ENCODE measurements at regions of chr20 and their contacts with region 1.

Region 1: DNA sequence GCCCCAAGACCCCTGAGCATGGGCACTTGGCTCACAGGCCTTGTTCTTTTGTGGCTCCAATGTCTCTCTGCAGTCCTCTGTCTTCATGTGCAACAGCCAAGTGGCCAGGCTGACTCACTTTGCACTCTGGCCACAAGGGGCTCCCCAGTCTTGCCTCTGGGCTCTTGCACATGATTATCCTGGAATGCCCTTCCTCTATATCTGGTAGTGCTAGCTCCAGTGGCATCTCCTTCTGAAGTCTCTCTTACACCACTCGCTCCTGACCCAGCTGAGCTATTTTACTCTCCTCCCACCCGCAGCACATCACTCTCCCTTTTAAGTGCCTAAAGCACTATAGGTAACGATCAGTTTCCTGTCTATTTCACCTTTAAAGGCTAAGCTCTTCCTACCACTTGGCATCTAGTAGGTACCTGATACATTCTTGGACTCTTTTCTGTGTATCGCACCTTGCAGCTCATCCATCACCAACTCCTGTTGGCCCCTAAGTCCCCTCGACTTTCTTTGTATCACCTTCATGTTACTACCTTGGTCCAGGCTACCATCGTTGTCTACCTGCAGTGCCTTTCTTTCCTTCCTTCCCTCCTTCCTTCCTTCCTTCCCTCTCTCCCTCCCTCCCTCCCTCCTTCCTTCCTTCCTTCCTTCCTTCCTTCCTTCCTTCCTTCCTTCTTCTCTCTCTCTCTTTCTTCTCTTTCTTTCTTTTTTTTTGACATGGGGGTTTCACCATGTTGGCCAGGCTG is 211.9 kb upstream of the RNF24 start:
- H3K4me3 Mint-ChIP-seq: no peak overlapping the region
- H3K27ac Mint-ChIP-seq: no peak overlapping the region
- H3K4me1 Mint-ChIP-seq: no peaks in the 10 kb centered on the region
- H3K27me3 Mint-ChIP-seq: peaks cover 24% of the 10 kb centered on the region

Region 2: GRCh38 chr20:4160761-4161305 is 66.4 kb before region 1 on chr20:
- intact Hi-C with region 1: no loop called
- H3K4me3 Mint-ChIP-seq: peak overlapping the region; percentile 51
- H3K27ac Mint-ChIP-seq: peak overlapping the region; percentile 89
- H3K4me1 Mint-ChIP-seq: peaks cover 85% of the 10 kb centered on the region
- H3K27me3 Mint-ChIP-seq: peaks cover 12% of the 10 kb centered on the region

Region 3: DNA sequence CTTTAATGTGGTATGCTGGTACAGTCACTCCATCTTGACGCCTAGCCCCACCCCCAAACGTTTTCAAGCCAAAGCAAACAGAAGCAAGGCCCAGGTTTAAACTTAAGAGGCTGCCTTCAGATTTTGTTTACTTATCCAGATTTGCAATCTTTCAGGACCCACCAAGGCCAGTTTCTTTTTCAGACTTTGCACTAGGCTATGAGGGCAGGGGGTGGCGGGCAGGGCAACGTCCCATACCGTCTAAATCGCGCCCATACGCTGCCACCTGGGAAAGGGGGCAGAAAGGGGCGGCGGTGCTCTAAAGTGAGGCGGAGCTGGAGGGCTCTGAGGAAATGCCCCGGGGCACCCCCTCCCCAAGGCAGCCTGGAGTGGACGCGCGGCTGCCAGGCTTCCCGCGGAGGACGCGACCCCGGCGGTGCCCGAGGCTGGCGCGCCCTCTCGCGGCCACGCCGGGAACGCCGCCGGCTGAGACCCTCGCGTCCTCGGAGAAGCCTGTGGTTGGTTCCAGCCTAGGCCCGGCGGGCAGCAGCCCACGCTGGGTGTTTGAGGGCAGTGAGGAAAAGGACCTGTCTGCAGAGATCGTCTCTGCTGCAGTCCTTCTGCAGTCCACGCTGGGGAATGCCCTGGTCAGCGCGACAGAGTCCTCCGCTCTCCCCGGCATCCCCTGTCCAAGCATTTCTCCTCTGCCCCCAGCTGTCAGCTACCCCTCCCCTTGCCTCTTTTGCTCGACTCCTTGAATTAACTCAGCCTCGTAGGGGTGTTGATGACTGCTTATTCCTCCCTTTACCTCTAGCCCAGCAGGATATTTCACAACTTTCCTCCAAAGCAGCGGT is 365.3 kb after region 1 on chr20:
- intact Hi-C with region 1: loop called (anchors 5 kb)
- H3K4me3 Mint-ChIP-seq: peak overlapping the region; percentile 54
- H3K27ac Mint-ChIP-seq: no peak overlapping the region
- H3K4me1 Mint-ChIP-seq: peaks cover 7% of the 10 kb centered on the region
- H3K27me3 Mint-ChIP-seq: peaks cover 30% of the 10 kb centered on the region

Measured in dendritic cell treated with granulocyte-macrophage colony-stimulating factor and Interleukin-4, amounts not matched to agents 40 ng/mL and 50 ng/mL, for 4 days (primary cell).